Thyroid gland (tissue), 4 donors: ENCODE measurements at regions of chr10 and their contacts with region 1.

Region 1: GRCh38 chr10:124389613-124390361 is 28.9 kb downstream of the OAT start:
- DNase-seq: no peak
- H3K4me3 ChIP-seq: no peak overlapping the region
- H3K27ac ChIP-seq: no peak overlapping the region
- H3K4me1 ChIP-seq: peaks cover 5 to 6% of the 10 kb centered on the region in 2 donors
- H3K27me3 ChIP-seq: no peaks in the 10 kb centered on the region
- CTCF ChIP-seq: peak in 1 of 6 experiments; percentile 6
- POLR2A ChIP-seq: no peak

Region 2: GRCh38 chr10:123994417-123995081 is 395.2 kb before region 1 on chr10:
- intact Hi-C with region 1: loop called (anchors 2 kb)
- DNase-seq: peak; percentile 86 to 87
- H3K4me3 ChIP-seq: no peak overlapping the region
- H3K27ac ChIP-seq: no peak overlapping the region
- H3K4me1 ChIP-seq: peaks cover 11 to 27% of the 10 kb centered on the region in 2 donors
- H3K27me3 ChIP-seq: peaks cover 5% of the 10 kb centered on the region
- CTCF ChIP-seq: peak; percentile 91 to 99 (median 98)
- POLR2A ChIP-seq: no peak